Sciatic nerve (tissue), 2 donors: ENCODE measurements at regions of chr6 and their contacts with region 1.

Region 1: DNA sequence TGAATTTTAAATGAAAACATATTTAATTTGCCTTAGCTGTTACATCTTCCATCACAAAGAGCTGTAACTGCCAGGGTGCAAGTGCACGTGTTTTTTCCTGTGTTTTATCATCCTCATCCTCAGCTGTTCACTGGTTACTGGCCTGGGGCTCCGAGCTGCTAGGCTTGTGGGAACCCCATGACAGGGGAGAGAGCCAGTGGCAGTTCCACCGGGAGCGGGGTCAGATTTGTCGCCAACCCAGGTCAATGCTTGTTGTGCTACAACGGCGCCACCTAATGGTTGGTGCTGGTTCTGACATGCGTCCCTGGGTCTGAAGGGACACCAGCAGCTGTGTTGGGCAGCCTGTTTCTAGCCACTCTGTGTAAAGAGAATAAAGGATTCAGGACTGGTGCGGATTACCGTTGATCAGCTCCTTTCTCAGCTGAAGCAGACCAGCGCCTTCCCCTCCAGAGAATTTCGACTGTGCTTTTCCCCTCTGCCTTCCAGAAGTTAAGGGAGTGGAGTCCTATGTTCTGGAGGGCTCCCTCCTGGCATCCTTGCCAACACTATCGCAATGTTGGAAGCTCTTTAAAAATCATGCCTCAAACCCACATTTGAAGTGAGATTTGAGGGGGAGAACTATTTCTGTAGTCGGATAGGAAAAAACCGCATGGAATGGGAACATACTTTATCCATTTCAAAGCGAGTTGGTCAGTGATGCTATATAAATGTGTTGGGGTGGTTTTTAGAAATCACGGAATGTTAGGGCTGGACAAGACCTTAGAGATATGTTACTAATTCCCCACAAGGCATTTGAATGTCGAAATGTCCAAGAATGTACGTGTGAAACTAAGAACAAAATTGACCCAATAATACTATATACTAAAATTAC is 32.1 kb downstream of the SUMO4 start:
- DNase-seq: peak; percentile 97
- ATAC-seq: peak; percentile 93

Region 2: DNA sequence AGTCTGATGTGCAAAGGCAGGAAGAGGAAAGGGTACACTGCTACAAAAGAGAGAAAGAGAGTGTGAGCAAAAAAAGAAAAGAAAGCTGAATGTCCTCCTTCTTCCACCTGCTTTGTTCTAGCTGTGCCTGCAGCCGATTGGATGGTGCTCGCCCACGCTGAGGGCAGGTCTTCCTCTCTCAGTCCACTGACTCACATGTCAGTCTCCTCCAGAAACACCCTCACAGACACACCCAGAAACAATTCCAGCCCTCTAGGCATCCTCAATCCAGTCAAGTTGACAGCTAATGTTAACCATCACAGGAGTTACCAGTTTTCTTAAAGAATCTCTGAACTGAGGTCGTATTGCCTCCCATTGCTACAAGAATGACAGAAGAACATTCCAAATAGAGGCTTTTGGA is 1501.4 kb before region 1 on chr6:
- intact Hi-C with region 1: no loop called
- DNase-seq: no peak
- ATAC-seq: no peak

Region 3: GRCh38 chr6:148451690-148452089 is 980.5 kb before region 1 on chr6:
- intact Hi-C with region 1: no loop called
- DNase-seq: no peak
- ATAC-seq: no peak

Region 4: GRCh38 chr6:149028767-149029405 is 403.3 kb before region 1 on chr6:
- intact Hi-C with region 1: loop called (anchors 2 kb)
- DNase-seq: peak; percentile 80
- ATAC-seq: peak; percentile 79

Region 5: DNA sequence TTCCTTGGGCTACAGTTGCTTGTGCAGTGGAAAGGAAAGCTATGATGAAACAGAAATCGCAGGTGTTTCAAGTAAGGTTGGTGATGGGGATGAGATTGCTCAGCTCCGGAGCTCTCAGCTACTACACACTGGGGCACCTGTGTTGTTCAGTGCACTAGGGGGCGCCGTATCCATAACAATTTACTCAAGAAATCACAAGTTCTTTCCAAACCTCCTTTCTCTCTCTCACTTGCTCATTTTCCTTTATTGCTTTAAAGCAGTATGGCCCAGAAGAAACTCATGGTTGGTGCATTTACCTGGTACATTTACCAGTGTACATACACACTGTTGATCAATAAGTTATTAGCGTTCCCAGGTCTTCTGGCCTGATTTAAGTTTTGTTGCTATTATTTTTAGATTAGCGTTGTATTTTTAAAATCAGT is 349.8 kb before region 1 on chr6:
- intact Hi-C with region 1: loop called (anchors 5 kb)
- DNase-seq: peak; percentile 92
- ATAC-seq: peak; percentile 71